Mammary epithelial cell (primary cell): ENCODE measurements at regions of chr10 and their contacts with region 1.

Region 1: DNA sequence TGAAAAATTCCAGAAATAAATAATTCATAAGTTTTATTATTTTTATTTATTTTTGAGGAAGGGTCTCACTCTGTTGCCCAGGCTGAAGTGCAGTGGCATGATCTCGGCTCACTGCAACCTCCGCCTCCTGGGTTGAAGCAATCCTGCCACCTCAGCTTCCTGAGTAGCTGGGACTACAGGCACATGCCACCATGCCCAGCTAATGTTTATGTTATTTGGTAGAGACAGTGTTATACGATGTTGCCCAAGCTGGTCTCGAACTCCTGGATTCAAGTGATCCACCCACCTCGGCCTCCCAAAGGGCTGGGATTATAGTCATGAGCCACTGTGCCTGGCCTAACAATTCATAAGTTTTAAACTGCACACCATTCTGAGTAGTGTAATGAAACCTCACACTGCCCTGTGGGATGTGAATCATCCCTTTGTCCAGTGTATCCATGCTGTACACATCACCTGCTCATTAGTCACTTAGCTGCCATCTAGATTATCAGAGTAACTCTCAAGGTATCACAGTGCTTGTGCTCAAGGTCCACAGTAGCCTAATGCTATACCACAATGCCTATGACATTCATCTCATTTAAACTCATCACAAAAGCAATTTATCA is 17.9 kb downstream of the RTKN2 start:
- DNase-seq: peak; percentile 98
- H3K4me3 ChIP-seq: no peak overlapping the region
- H3K27ac ChIP-seq: peak overlapping the region; percentile 51
- H3K4me1 ChIP-seq: no peaks in the 10 kb centered on the region
- H3K27me3 ChIP-seq: no peaks in the 10 kb centered on the region
- CTCF ChIP-seq: no peak

Region 2: GRCh38 chr10:62422068-62422590 is 171.4 kb after region 1 on chr10:
- CTCF ChIA-PET with region 1: no interaction called
- dilution Hi-C with region 1: no loop called
- in situ Hi-C with region 1: loop called in 1 of 2 experiments (anchors 10 kb)
- intact Hi-C with region 1: no loop called
- DNase-seq: peak; percentile 88
- H3K4me3 ChIP-seq: no peak overlapping the region
- H3K27ac ChIP-seq: peak overlapping the region; percentile 59
- H3K4me1 ChIP-seq: peaks cover 30% of the 10 kb centered on the region
- H3K27me3 ChIP-seq: no peaks in the 10 kb centered on the region
- CTCF ChIP-seq: peak; percentile 11